ENCODE measurements at regions of chr10 and their contacts with region 1.

Region 1: GRCh38 chr10:33115738-33116719 is 158.0 kb upstream of the ITGB1 start:
- DNase-seq: peak in 4 of 5 donors; percentile 43 to 66 (median 54)
- H3K4me3 ChIP-seq: peak overlapping the region; percentile 21 to 36
- H3K4me3 Mint-ChIP-seq: peak overlapping the region; percentile 74 to 92 (median 86)
- H3K27ac ChIP-seq: peak overlapping the region; percentile 74
- H3K27ac Mint-ChIP-seq: peak overlapping the region; percentile 91 to 98 (median 96)
- H3K4me1 ChIP-seq: peaks cover 99% of the 10 kb centered on the region
- H3K4me1 Mint-ChIP-seq: peaks cover 77 to 100% (median 86%) of the 10 kb centered on the region in 4 donors
- H3K27me3 ChIP-seq: no peaks in the 10 kb centered on the region
- H3K27me3 Mint-ChIP-seq: no peaks in the 10 kb centered on the region

Region 2: DNA sequence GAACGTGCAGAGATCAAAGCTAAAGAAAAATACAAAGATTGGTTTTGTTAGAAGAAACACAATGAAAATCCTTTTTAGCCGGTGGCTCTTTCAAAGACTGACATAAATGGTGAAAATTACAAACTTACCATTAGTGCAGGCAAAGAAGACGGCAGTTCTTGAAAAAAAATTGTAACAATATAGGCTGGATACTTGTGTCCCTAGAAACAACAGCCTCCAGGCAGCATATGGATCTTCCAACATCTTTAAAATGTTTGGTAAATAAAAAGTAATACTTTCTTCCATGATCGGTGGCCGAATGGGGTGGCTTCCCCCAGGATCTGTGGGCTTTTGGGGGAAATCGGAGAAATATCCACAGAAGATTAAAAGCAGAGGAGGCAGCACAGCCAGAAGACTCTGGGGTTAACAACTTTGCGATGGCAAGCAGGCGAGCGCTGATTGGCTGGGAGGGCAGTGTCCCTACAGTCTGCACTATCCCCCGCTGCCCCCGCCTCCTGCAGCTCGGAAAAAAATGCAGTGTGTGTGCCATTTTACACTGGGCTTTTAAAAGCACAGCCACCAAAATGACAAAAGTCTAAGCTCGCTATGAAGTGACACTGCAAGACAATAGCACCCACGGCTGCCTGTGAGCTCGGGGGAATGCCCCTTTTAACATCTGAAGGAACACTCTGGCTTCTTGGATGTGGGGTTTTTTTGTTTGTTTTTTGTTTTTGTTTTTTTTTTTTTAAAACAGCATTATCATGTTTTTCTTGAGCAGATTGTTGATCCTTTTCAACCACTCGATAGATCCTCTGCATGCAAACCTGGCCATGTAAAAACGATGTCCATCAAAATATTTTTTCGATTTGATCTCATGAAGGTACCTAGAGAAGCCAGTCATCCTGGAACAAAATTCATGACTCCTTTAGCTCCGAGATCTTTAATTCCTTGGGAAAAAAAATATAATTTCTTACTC is 737.4 kb before region 1 on chr10:
- CTCF ChIA-PET with region 1: no interaction called
- POLR2A ChIA-PET with region 1: interaction called, 15 read pairs
- intact Hi-C with region 1: loop called (anchors 5 kb)
- DNase-seq: peak; percentile 88 to 97 (median 91)
- H3K4me3 ChIP-seq: peak overlapping the region; percentile 74 to 99
- H3K4me3 Mint-ChIP-seq: no peak overlapping the region
- H3K27ac ChIP-seq: peak overlapping the region; percentile 73
- H3K27ac Mint-ChIP-seq: no peak overlapping the region
- H3K4me1 ChIP-seq: peaks cover 34% of the 10 kb centered on the region
- H3K4me1 Mint-ChIP-seq: peaks cover 17 to 24% (median 19%) of the 10 kb centered on the region in 4 donors
- H3K27me3 ChIP-seq: no peaks in the 10 kb centered on the region
- H3K27me3 Mint-ChIP-seq: no peaks in the 10 kb centered on the region

Region 3: DNA sequence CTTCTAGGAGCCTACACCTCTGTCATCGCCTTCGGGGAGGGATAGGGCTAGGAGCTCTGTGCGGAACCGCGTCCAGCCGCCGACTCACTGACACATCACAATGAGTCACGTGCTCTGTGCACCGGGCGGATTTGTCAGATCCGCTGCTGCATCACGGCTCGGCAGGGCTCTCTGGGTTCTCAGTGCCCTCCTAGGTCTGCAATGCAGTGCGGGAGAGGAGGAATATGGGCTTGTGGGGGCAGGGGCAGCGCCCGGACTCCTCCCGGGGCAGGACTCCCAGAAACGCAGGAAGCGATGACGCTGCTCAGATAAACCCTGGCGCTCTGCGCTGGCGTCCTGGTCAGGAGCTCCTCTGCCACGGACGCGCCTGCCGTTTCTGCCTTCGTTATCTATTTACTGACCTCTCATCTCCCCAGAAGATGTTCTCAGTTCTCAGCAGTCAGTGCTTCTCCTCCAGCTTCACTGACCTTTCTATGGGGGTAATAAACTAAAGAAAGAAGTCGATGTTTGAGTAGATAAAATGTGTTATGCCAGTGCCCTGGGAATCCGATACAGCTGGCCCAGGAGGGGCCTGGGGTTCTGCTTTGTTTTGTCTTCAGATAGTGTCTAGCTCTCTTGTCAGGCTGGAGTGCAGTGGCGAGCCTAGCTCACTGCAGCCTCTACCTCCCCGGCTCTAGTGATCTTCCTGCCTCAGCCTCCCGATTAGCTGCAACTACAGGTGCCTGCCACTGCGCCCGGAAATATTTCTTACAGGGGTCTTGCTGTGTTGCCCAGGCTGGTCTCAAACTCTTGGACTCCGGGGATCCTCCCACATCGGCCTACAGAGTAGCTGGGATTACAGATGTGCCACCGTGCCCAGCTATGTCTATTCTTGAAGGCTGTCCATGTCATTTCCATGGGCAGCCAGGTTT is 135.2 kb before region 1 on chr10:
- CTCF ChIA-PET with region 1: interaction called, 4 read pairs
- POLR2A ChIA-PET with region 1: interaction called, 46 read pairs
- intact Hi-C with region 1: no loop called
- DNase-seq: peak; percentile 77 to 94 (median 80)
- H3K4me3 ChIP-seq: peak overlapping the region; percentile 30 to 87
- H3K4me3 Mint-ChIP-seq: peak overlapping the region; percentile 93 to 98 (median 95)
- H3K27ac ChIP-seq: peak overlapping the region; percentile 84
- H3K27ac Mint-ChIP-seq: peak overlapping the region; percentile 92 to 99 (median 98)
- H3K4me1 ChIP-seq: peaks cover 40% of the 10 kb centered on the region
- H3K4me1 Mint-ChIP-seq: peaks cover 25 to 39% (median 34%) of the 10 kb centered on the region in 4 donors
- H3K27me3 ChIP-seq: no peaks in the 10 kb centered on the region
- H3K27me3 Mint-ChIP-seq: no peaks in the 10 kb centered on the region

Region 4: DNA sequence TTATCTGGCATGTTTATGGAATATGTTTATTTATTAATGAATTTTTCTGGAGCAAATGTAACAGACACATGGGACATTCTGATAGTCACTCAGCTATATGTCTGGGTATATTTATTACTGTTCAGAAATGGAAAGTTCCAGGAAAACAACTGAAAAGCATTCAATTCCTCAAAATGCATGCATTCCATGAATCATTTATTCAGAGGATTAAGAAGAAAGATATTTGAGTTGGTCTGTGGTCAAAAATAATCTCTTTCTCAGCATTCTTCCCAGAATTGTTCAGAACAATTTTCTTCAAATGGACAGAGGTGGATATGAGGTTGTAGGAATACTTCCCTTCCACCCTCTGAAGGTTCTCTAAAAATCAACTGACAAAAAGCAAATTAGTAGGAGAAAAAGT is 60.4 kb before region 1 on chr10:
- CTCF ChIA-PET with region 1: interaction called, 7 read pairs
- POLR2A ChIA-PET with region 1: interaction called, 12 read pairs
- intact Hi-C with region 1: no loop called
- DNase-seq: no peak
- H3K4me3 ChIP-seq: no peak overlapping the region
- H3K4me3 Mint-ChIP-seq: no peak overlapping the region
- H3K27ac ChIP-seq: no peak overlapping the region
- H3K27ac Mint-ChIP-seq: peak overlapping the region in 1 of 7 donors; percentile 39
- H3K4me1 ChIP-seq: peaks cover 7% of the 10 kb centered on the region
- H3K4me1 Mint-ChIP-seq: peaks cover 23 to 72% (median 44%) of the 10 kb centered on the region in 4 donors
- H3K27me3 ChIP-seq: no peaks in the 10 kb centered on the region
- H3K27me3 Mint-ChIP-seq: no peaks in the 10 kb centered on the region

Region 5: GRCh38 chr10:33095867-33096815 is 19.9 kb before region 1 on chr10:
- CTCF ChIA-PET with region 1: interaction called, 36 read pairs
- POLR2A ChIA-PET with region 1: interaction called, 2,213 read pairs
- intact Hi-C with region 1: loop called (anchors 2 kb)
- DNase-seq: no peak
- H3K4me3 ChIP-seq: no peak overlapping the region
- H3K4me3 Mint-ChIP-seq: peak overlapping the region in 4 of 8 donors; percentile 7 to 49 (median 23)
- H3K27ac ChIP-seq: no peak overlapping the region
- H3K27ac Mint-ChIP-seq: peak overlapping the region in 4 of 7 donors; percentile 12 to 50 (median 27)
- H3K4me1 ChIP-seq: peaks cover 48% of the 10 kb centered on the region
- H3K4me1 Mint-ChIP-seq: peaks cover 48 to 80% (median 67%) of the 10 kb centered on the region in 4 donors
- H3K27me3 ChIP-seq: no peaks in the 10 kb centered on the region
- H3K27me3 Mint-ChIP-seq: no peaks in the 10 kb centered on the region

Region 6: GRCh38 chr10:33155720-33156638 is 40.0 kb after region 1 on chr10:
- CTCF ChIA-PET with region 1: interaction called, 89 read pairs
- POLR2A ChIA-PET with region 1: interaction called, 2,213 read pairs
- intact Hi-C with region 1: loop called (anchors 1 kb)
- DNase-seq: peak; percentile 59 to 71 (median 67)
- H3K4me3 ChIP-seq: no peak overlapping the region
- H3K4me3 Mint-ChIP-seq: peak overlapping the region in 6 of 8 donors; percentile 3 to 79 (median 50)
- H3K27ac ChIP-seq: no peak overlapping the region
- H3K27ac Mint-ChIP-seq: peak overlapping the region; percentile 21 to 98 (median 84)
- H3K4me1 ChIP-seq: peaks cover 53% of the 10 kb centered on the region
- H3K4me1 Mint-ChIP-seq: peaks cover 35 to 54% (median 48%) of the 10 kb centered on the region in 4 donors
- H3K27me3 ChIP-seq: no peaks in the 10 kb centered on the region
- H3K27me3 Mint-ChIP-seq: no peaks in the 10 kb centered on the region

Region 7: DNA sequence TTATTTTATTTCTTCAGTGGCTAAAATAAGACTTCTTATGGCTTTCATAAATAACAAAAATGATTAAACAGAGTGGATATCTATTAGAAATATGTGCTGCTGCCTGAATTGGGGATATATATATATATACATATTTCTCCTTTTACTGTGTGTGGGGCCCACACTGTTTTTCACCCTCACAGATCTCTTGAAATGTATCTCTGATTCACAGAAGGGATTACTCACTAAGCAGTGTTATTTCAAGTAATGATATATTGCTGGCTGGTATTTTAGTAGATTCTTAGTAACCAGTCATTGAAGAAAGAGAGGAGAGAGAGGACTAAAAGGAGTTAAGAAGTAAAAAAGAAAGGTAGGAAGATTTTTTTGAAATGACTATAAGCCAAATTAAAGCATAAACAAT is 527.0 kb after region 1 on chr10:
- CTCF ChIA-PET with region 1: no interaction called
- POLR2A ChIA-PET with region 1: no interaction called
- intact Hi-C with region 1: no loop called
- DNase-seq: no peak
- H3K4me3 ChIP-seq: no peak overlapping the region
- H3K4me3 Mint-ChIP-seq: no peak overlapping the region
- H3K27ac ChIP-seq: no peak overlapping the region
- H3K27ac Mint-ChIP-seq: no peak overlapping the region
- H3K4me1 ChIP-seq: no peaks in the 10 kb centered on the region
- H3K4me1 Mint-ChIP-seq: no peaks in the 10 kb centered on the region
- H3K27me3 ChIP-seq: no peaks in the 10 kb centered on the region
- H3K27me3 Mint-ChIP-seq: peaks cover 2 to 11% of the 10 kb centered on the region in 2 donors